Activated T-helper 2 cell treated with anti-CD3 and anti-CD28 coated beads, Interferon-gamma antibody, Interleukin-2, Interleukin-4, amounts not matched to agents 10 μg/mL and 5 μg/mL and 100 μg/mL, durations not matched to agents 14 hours and 24 hours and 36 hours (primary cell): ENCODE measurements at regions of chr2 and their contacts with region 1.

Region 1: DNA sequence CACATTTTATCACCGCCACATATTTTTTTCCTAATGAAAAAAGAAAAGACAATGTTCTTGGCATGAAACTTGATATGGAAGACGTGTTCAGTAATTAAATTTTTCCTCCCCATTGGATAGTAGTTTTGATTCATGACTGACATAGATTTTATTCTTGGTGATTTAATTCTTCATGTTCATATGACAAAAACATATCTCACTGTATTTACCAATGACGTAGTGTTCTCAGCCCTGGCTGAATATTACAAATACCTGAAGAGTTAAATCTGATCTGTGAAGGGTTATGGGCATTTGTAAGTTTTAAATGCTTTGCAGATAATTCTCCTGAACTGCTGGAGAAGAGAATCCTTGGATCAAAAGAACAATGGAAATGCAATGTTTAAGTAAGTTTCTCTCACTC is 460.9 kb downstream of the DCDC2C start:
- DNase-seq: no peak
- H3K4me3 Mint-ChIP-seq: no peak overlapping the region
- H3K27ac Mint-ChIP-seq: no peak overlapping the region
- H3K4me1 Mint-ChIP-seq: no peaks in the 10 kb centered on the region
- H3K27me3 Mint-ChIP-seq: no peaks in the 10 kb centered on the region

Region 2: GRCh38 chr2:4175343-4175742 is 11.1 kb after region 1 on chr2:
- intact Hi-C with region 1: loop called (anchors 1 kb)
- DNase-seq: no peak
- H3K4me3 Mint-ChIP-seq: no peak overlapping the region
- H3K27ac Mint-ChIP-seq: no peak overlapping the region
- H3K4me1 Mint-ChIP-seq: no peaks in the 10 kb centered on the region
- H3K27me3 Mint-ChIP-seq: no peaks in the 10 kb centered on the region

Region 3: GRCh38 chr2:4844881-4845280 is 680.6 kb after region 1 on chr2:
- intact Hi-C with region 1: no loop called
- DNase-seq: no peak
- H3K4me3 Mint-ChIP-seq: no peak overlapping the region
- H3K27ac Mint-ChIP-seq: no peak overlapping the region
- H3K4me1 Mint-ChIP-seq: no peaks in the 10 kb centered on the region
- H3K27me3 Mint-ChIP-seq: no peaks in the 10 kb centered on the region